A549 (cell line): ENCODE measurements at regions of chr12 and their contacts with region 1.

Region 1: GRCh38 chr12:751192-751998 is 984 bp upstream of the WNK1 start:
- DNase-seq: peak; percentile 94 to 99
- ATAC-seq: peak; percentile 70 to 85
- H3K4me3 ChIP-seq: peak overlapping the region; percentile 49
- H3K27ac ChIP-seq: peak overlapping the region; percentile 79 to 90
- H3K4me1 ChIP-seq: peaks cover 19% of the 10 kb centered on the region
- CTCF ChIP-seq: peak; percentile 80
- EP300 ChIP-seq: no peak
- POLR2A ChIP-seq: peak; percentile 73
- RAD21 ChIP-seq: peak; percentile 86 to 89

Region 2: DNA sequence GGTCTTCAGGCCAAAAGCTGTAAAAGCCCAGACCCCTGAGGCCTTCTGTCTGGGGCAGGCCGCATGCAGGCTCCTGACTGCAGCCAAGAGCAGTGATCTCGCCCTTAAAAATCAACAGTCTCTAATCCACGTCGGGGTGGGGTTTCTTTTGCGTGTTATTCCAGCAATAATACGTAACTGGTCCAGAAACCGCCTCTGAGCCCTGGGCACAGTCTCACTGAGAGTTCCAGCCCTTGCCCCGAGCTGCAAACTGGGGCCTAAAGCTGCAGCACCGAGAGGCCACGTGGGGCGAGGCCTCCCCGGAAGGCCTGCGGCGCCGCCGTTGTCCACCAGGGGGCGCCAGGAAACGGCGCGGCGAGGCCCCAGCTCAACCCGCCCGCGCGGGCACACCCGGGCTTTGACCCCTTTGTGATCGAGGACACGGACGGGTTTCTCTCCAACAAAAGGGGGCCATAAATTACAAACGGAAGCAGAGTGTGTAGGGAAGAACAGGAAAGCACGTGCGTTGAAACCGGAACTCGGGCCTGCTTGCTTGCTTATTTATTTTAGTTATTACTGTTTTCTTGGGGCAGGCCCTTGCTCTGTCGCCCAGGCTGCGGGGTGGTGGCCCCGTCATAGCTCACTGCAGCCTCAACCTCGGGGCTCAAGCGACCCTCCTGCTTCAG is 175.3 kb before region 1 on chr12:
- CTCF ChIA-PET with region 1: interaction called, 292 read pairs
- POLR2A ChIA-PET with region 1: interaction called, 77 read pairs
- DNase-seq: peak; percentile 83 to 84
- ATAC-seq: peak; percentile 42 to 64; a peak in 5 of 6 replicates
- H3K4me3 ChIP-seq: no peak overlapping the region
- H3K27ac ChIP-seq: peak overlapping the region; percentile 82 to 97
- H3K4me1 ChIP-seq: peaks cover 63% of the 10 kb centered on the region
- CTCF ChIP-seq: peak; percentile 96
- EP300 ChIP-seq: no peak
- POLR2A ChIP-seq: peak; percentile 19
- RAD21 ChIP-seq: peak; percentile 84 to 96

Region 3: DNA sequence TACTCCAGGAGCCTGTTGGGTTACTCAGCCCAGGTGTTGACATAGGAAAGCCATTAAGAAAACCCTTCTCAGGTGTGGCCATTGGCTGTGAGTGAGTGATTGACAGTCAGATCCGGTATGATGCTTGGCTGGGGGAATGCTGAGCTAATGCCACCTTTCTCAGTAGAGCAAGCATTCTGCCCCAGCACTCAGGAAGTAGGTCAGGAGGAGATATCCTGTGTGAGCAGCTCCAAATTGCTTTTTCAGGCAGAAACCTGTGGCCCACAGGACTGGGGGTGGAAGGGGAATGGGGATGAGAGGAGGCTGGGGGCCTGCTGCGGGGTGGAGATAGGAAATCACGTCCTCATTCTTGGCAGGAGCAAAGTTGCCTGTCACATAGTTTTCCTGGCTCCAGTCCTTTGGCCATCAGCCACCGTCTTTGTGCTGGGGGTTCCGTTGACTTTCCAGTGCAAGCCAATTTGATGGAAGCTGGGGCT is 143.8 kb before region 1 on chr12:
- CTCF ChIA-PET with region 1: interaction called, 52 read pairs
- POLR2A ChIA-PET with region 1: no interaction called
- DNase-seq: no peak
- ATAC-seq: no peak
- H3K4me3 ChIP-seq: no peak overlapping the region
- H3K27ac ChIP-seq: peak overlapping the region in 1 of 2 experiments; percentile 30; a peak in 1 of 6 replicates
- H3K4me1 ChIP-seq: peaks cover 12% of the 10 kb centered on the region
- CTCF ChIP-seq: no peak
- EP300 ChIP-seq: no peak
- POLR2A ChIP-seq: no peak
- RAD21 ChIP-seq: no peak

Region 4: GRCh38 chr12:630656-631632 is 120.5 kb before region 1 on chr12:
- CTCF ChIA-PET with region 1: interaction called, 36 read pairs
- POLR2A ChIA-PET with region 1: interaction called, 45 read pairs
- DNase-seq: no peak
- ATAC-seq: no peak
- H3K4me3 ChIP-seq: no peak overlapping the region
- H3K27ac ChIP-seq: peak overlapping the region; percentile 96 to 97
- H3K4me1 ChIP-seq: peaks cover 58% of the 10 kb centered on the region
- CTCF ChIP-seq: no peak
- EP300 ChIP-seq: no peak
- POLR2A ChIP-seq: no peak
- RAD21 ChIP-seq: no peak

Region 5: GRCh38 chr12:685388-685787 is 66.0 kb before region 1 on chr12:
- CTCF ChIA-PET with region 1: interaction called, 10 read pairs
- POLR2A ChIA-PET with region 1: no interaction called
- DNase-seq: peak in 1 of 2 experiments; percentile 42
- ATAC-seq: peak; percentile 34 to 61; a peak in 3 of 6 replicates
- H3K4me3 ChIP-seq: no peak overlapping the region
- H3K27ac ChIP-seq: no peak overlapping the region
- H3K4me1 ChIP-seq: 0 out of 3 replicates have a peak, but pooled peaks cover 3% of the 10 kb centered on the region
- CTCF ChIP-seq: no peak
- EP300 ChIP-seq: no peak
- POLR2A ChIP-seq: no peak
- RAD21 ChIP-seq: no peak

Region 6: GRCh38 chr12:737122-737739 is 14.2 kb before region 1 on chr12:
- CTCF ChIA-PET with region 1: interaction called, 62 read pairs
- POLR2A ChIA-PET with region 1: interaction called, 3 read pairs
- DNase-seq: no peak
- ATAC-seq: no peak
- H3K4me3 ChIP-seq: no peak overlapping the region
- H3K27ac ChIP-seq: no peak overlapping the region
- H3K4me1 ChIP-seq: no peaks in the 10 kb centered on the region
- CTCF ChIP-seq: no peak
- EP300 ChIP-seq: no peak
- POLR2A ChIP-seq: no peak
- RAD21 ChIP-seq: no peak

Region 7: GRCh38 chr12:949453-950191 is 198.2 kb after region 1 on chr12 and contains the start of gene RAD52:
- CTCF ChIA-PET with region 1: interaction called, 5 read pairs
- POLR2A ChIA-PET with region 1: interaction called, 21 read pairs
- DNase-seq: peak; percentile 82 to 100
- ATAC-seq: peak; percentile 96 to 97
- H3K4me3 ChIP-seq: peak within 1 kb of the TSS; percentile 69
- H3K27ac ChIP-seq: peak within 1 kb of the TSS; percentile 88 to 98
- H3K4me1 ChIP-seq: peaks cover 11% of the 10 kb centered on the region; the same call in 1 of the 3 replicates
- CTCF ChIP-seq: peak; percentile 95
- EP300 ChIP-seq: no peak
- POLR2A ChIP-seq: peak; percentile 77
- RAD21 ChIP-seq: peak; percentile 87 to 94
- polyA plus RNA-seq, gene RAD52: 23.6 and 29.6 TPM in 2 replicates